ENCODE measurements at regions of chr18 and their contacts with region 1.

Region 1: DNA sequence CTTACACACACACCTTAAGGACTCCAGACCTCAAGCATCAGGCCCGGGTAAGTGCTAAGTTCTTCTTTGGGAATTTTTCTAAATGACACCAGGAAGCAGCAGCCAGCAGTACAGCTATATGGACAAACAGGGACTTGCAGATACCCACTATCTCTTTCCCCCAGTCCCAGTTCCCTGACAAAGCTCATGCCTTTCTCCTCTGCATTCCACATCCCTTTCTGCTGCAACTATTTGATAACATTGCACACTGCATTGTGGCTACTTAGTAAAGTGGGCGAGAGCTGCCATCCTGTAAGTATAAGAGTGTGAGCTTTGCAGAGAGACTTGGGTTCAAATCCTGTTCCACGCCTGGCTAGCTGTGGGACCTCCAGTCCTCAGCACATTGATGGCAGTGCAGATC is 14.0 kb upstream of the CD226 start:
- DNase-seq: no peak
- ATAC-seq: no peak
- H3K4me3 ChIP-seq: no peak overlapping the region
- H3K27ac ChIP-seq: no peak overlapping the region
- H3K4me1 ChIP-seq: no peaks in the 10 kb centered on the region
- H3K27me3 ChIP-seq: no peaks in the 10 kb centered on the region

Region 2: DNA sequence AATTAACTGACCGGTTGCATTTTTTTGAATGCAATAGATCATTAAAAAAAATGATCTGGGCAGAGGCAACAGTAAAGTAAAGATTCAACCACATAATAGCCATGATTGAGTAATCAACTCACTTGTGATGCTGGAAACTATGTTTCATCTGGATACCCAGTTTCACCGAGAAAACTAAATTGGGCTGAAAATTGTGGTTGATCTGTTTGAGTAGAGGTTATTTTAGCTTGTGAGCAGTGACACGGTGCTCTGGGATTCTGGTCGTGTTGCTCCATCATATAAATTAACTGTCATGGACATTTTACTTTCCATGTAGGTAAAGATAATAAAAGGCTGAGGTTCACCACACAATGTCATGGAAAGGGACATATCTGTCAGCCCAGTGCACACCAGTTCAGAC is 72.7 kb before region 1 on chr18:
- intact Hi-C with region 1: loop called in 1 of 2 experiments (anchors 2 kb)
- DNase-seq: no peak
- ATAC-seq: no peak
- H3K4me3 ChIP-seq: no peak overlapping the region
- H3K27ac ChIP-seq: no peak overlapping the region
- H3K4me1 ChIP-seq: no peaks in the 10 kb centered on the region
- H3K27me3 ChIP-seq: no peaks in the 10 kb centered on the region

Region 3: DNA sequence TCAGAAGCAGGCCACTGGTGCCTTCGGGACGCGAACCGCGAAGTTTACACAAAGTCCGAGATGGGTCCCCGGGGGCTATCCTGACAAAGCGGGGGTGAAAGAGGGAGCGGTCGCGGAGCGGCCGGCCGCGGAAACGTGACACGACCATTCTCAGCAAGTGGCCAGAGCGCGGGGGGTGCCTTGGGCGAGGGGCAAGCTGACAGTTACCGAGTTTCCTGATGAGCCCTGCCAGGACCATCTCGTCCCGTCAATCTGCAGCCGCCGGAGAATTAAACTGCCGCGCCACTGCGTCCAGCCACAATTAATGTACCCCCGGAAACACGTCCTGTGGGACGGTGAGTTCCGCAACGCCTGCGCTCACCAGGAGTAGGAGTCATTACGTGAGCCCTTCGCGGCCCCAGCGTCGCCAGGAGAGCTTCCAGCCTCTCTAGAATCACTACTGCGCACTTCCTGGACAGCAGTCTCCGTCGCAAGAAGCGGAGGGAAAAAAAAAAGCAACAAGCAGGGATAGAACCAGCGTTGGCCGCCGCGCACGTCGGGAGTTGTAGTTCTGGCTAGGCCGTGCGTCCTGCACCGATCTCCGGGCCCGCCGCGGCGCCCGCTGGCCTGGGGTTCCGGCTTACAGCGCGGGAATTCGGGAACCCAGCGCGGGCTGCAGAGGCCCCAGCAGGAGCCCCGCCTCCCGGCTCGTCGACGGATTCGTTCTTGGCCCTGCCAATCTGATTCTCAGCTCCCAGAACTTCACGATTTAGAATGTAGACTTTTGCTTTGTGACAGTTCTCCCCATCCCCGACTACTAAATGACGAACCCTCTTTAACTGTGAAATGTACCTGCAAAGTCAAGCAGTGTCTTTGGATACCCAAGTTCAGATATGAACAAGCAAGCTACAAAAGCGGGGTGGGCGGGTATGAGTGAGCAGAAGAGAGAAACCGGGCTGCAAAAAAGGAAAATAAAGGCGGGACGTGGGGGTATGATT is 244.0 kb after region 1 on chr18 and contains the start of gene RTTN:
- intact Hi-C with region 1: no loop called
- DNase-seq: peak; percentile 96 to 98
- ATAC-seq: peak; percentile 100
- H3K4me3 ChIP-seq: peak within 1 kb of the TSS; percentile 95 to 98
- H3K27ac ChIP-seq: peak within 1 kb of the TSS; percentile 91 to 99
- H3K4me1 ChIP-seq: no peaks in the 10 kb centered on the region
- H3K27me3 ChIP-seq: no peaks in the 10 kb centered on the region
- total RNA-seq, gene RTTN: 16.5 to 17.5 TPM

Region 4: GRCh38 chr18:70337139-70337972 is 375.6 kb after region 1 on chr18:
- intact Hi-C with region 1: no loop called
- DNase-seq: peak in 1 of 2 donors; percentile 51
- ATAC-seq: peak; percentile 61
- H3K4me3 ChIP-seq: no peak overlapping the region
- H3K27ac ChIP-seq: no peak overlapping the region
- H3K4me1 ChIP-seq: no peaks in the 10 kb centered on the region
- H3K27me3 ChIP-seq: no peaks in the 10 kb centered on the region